ENCODE measurements at regions of chr12 and their contacts with region 1.

Region 1: GRCh38 chr12:107884769-107885694 is 110.5 kb downstream of the ASCL4 start:
- DNase-seq: peak; percentile 67 to 80
- H3K4me3 ChIP-seq: no peak overlapping the region
- H3K27ac ChIP-seq: no peak overlapping the region
- H3K4me1 ChIP-seq: no peaks in the 10 kb centered on the region
- H3K27me3 ChIP-seq: peaks cover 0 to 16% (median 0%) of the 10 kb centered on the region in 3 donors
- CTCF ChIP-seq: peak in 5 of 7 experiments; percentile 49 to 77 (median 59)
- EP300 ChIP-seq: no peak
- POLR2A ChIP-seq: no peak

Region 2: DNA sequence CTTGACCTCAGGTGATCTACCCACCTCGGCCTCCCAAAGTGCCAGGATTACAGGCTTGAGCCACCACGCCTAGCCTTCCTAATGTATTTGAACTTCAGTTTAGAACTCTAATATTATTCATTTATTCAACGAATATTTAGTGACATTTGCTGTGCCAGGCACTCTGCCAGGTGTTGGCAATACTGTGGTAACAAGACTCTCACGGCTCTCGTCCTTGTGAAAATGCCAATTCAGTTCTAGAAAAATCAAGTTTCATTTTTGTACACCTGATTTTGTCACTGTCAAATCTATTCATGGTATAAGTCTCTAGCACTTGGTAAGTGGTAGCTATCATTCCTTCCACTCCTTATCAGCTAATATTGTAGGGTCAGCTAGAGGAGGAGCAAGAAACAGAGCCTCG is 205.7 kb before region 1 on chr12:
- intact Hi-C with region 1: loop called (anchors 5 kb)
- DNase-seq: no peak
- H3K4me3 ChIP-seq: no peak overlapping the region
- H3K27ac ChIP-seq: no peak overlapping the region
- H3K4me1 ChIP-seq: peaks cover 0 to 6% (median 0%) of the 10 kb centered on the region in 4 donors
- H3K27me3 ChIP-seq: peaks cover 0 to 32% (median 9%) of the 10 kb centered on the region in 3 donors
- CTCF ChIP-seq: no peak
- EP300 ChIP-seq: no peak
- POLR2A ChIP-seq: no peak

Region 3: DNA sequence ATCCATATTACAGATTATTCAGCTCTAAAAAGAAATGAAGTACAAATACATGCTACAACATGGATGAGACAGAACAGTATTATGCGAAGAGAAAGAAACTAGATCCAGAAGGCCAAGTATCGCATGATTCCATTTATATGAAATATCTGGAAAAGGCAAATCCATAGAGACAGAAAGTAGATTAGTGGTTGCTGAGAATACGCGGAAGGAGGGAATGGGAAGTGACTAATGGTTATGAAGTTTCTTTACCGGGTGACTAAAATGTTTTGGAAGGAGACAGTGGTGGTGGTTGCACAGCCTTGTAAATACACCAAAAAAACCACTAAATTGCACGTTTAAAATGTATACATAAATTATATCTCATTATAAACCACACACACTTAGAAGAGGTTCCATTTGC is 136.6 kb before region 1 on chr12:
- intact Hi-C with region 1: no loop called
- DNase-seq: no peak
- H3K4me3 ChIP-seq: no peak overlapping the region
- H3K27ac ChIP-seq: no peak overlapping the region
- H3K4me1 ChIP-seq: peaks cover 0 to 18% (median 7%) of the 10 kb centered on the region in 4 donors
- H3K27me3 ChIP-seq: no peaks in the 10 kb centered on the region
- CTCF ChIP-seq: no peak
- EP300 ChIP-seq: no peak
- POLR2A ChIP-seq: no peak

Region 4: DNA sequence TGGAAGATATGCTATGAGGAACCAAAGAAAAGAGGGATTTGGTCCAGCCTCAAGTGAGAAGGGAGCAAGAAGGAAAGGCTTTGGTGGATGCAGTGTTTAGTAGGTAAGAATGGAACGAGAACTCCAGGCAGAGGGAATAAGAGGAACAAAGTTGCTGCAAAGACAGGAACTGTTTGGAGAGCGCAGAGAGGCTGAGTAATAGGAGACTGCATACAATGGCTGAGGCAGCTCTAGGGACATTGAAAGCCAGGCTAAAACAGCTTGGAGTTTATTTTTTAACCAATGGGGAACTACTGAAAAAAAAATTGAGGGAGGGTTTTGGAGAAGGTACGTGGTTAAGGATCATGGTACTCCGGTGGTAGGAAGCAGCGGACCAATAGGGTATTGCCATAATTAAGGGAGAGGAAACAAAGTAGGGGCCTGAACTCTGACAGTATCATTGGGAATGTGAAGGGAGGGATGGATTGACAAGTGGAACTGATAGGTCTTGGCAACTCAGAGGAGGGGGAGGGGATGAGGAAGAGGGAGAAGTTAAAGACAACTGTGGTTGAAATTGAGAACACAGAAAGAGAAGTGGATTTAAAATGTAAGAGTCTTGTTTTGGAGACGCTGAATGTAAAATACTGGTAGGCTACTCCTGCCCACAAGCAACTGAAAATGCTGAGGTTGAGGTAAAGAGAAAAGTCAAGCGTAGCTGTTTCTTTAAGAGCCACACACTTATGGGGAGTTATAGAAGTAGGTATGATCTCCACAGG is 105.8 kb before region 1 on chr12:
- intact Hi-C with region 1: loop called (anchors 10 kb)
- DNase-seq: no peak
- H3K4me3 ChIP-seq: no peak overlapping the region
- H3K27ac ChIP-seq: peak overlapping the region in 1 of 5 donors; percentile 24
- H3K4me1 ChIP-seq: peaks cover 0 to 28% (median 15%) of the 10 kb centered on the region in 4 donors
- H3K27me3 ChIP-seq: peaks cover 0 to 27% (median 20%) of the 10 kb centered on the region in 3 donors
- CTCF ChIP-seq: no peak
- EP300 ChIP-seq: no peak
- POLR2A ChIP-seq: no peak

Region 5: GRCh38 chr12:108052260-108052659 is 167.2 kb after region 1 on chr12:
- intact Hi-C with region 1: no loop called
- DNase-seq: no peak
- H3K4me3 ChIP-seq: no peak overlapping the region
- H3K27ac ChIP-seq: no peak overlapping the region
- H3K4me1 ChIP-seq: peaks cover 0 to 3% (median under 1%) of the 10 kb centered on the region in 4 donors
- H3K27me3 ChIP-seq: peaks cover 0 to 33% (median 0%) of the 10 kb centered on the region in 3 donors
- CTCF ChIP-seq: no peak
- EP300 ChIP-seq: no peak
- POLR2A ChIP-seq: no peak

Region 6: GRCh38 chr12:108106599-108106998 is 221.6 kb after region 1 on chr12:
- intact Hi-C with region 1: no loop called
- DNase-seq: no peak
- H3K4me3 ChIP-seq: no peak overlapping the region
- H3K27ac ChIP-seq: no peak overlapping the region
- H3K4me1 ChIP-seq: no peaks in the 10 kb centered on the region
- H3K27me3 ChIP-seq: peaks cover 0 to 24% (median 4%) of the 10 kb centered on the region in 3 donors
- CTCF ChIP-seq: no peak
- EP300 ChIP-seq: no peak
- POLR2A ChIP-seq: no peak

Measured in stomach (tissue), 19 donors.